Posterior cingulate gyrus (tissue), 11 donors: ENCODE measurements at regions of chr12 and their contacts with region 1.

Region 1: GRCh38 chr12:50986966-50987737 is 34.8 kb downstream of the HIGD1C start:
- DNase-seq: peak in 3 of 10 donors; percentile 39 to 52 (median 48)

Region 2: GRCh38 chr12:50504798-50505385 is 482.3 kb before region 1 on chr12 and contains the start of gene DIP2B:
- intact Hi-C with region 1: loop called (anchors 5 kb)
- DNase-seq: peak; percentile 88 to 99 (median 94)

Region 3: DNA sequence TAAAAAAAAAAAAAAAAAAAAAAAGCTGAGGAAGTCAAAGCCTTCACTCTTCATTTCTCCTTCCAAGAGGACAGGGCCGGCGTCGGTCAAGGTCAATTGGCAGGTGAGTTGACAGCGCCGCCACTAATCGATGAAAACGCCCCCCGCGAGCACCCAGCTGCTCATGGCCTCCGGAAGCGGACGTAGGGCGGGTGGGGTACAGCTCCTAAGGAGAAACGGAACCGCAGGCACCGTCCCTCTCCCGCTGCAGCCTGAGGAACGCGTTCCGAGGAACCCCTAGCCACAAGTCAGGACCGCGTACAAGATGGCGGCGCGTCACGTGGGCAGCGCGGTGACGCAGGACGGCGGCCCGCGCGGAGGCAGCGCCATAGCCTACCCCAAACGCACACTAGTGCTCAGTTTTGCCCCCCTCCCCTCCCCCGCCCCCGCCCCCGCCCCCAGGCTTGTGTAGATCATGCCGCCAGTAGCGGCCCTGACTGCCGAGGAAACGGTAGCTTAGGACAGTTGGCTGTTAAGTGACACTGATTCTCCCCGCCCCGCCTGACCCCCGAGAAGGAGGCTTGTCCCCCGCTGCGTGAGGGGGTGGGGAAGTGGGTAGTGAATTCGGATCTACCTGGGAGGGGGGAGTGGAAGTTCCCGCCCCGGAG is 223.4 kb before region 1 on chr12 and contains the start of gene ATF1:
- intact Hi-C with region 1: loop called (anchors 2 kb)
- DNase-seq: peak; percentile 85 to 99 (median 90)

Region 4: GRCh38 chr12:50825372-50825838 is 161.7 kb before region 1 on chr12:
- intact Hi-C with region 1: loop called (anchors 1 kb)
- DNase-seq: no peak

Region 5: DNA sequence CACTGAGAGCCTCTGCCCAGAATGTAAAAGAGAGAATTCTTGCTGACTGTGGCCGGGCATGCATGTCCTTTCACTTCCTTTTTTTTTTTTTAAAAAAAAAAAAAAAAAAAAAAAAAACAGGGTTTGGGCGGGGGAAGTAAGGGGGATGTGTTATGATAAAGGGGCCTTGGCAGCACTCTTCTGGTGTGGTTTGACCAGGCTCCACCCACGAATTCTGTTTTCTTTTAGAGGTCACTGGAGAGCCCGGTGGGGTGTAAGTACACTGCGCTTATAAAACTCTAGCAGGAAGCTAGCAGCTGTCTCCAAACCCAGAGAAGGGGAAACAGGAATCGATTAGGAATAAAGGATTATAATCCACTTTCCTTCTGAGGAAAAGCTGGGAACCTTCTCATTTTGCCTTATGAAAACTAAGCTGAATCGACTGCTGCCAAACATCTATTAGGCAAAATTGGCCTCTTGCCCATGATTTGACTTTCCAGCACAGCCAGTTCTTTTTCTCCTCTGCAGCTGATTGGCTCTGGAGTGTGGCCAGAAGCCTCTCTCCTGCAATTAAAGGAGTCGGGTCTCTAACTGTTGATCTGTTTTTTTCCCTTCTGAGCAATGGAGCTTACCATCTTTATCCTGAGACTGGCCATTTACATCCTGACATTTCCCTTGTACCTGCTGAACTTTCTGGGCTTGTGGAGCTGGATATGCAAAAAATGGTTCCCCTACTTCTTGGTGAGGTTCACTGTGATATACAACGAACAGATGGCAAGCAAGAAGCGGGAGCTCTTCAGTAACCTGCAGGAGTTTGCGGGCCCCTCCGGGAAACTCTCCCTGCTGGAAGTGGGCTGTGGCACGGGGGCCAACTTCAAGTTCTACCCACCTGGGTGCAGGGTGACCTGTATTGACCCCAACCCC is 62.5 kb before region 1 on chr12:
- intact Hi-C with region 1: loop called (anchors 5 kb)
- DNase-seq: peak; percentile 60 to 95 (median 80)